ENCODE measurements at regions of chr1 and their contacts with region 1.

Region 1: DNA sequence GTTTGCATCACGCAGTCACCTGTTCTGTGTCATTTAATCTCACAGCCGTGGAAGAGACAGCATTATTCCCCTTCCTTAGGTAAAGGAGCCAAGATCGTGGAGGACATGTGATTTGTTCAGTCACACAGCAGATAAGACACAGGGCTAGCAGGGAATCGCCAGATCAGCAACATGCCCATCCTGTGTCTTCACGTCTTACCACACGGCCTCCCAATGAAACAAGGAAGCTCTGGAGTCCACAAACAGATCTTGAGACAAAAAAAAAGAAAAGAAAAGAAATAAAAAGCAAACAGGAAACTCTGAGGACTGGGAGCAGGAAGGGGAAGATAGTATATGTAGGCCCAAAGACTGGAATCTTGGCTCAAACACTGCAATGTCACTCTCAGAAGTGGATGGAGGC is 155.3 kb downstream of the ADSS2 start:
- DNase-seq: no peak
- H3K4me3 ChIP-seq: no peak overlapping the region
- H3K27ac ChIP-seq: no peak overlapping the region
- H3K4me1 ChIP-seq: peaks cover 0 to 4% (median 2%) of the 10 kb centered on the region in 4 experiments; a peak in 3 of 7 replicates
- H3K27me3 ChIP-seq: no peaks in the 10 kb centered on the region
- CTCF ChIP-seq: no peak
- EP300 ChIP-seq: no peak
- POLR2A ChIP-seq: no peak
- RAD21 ChIP-seq: no peak

Region 2: DNA sequence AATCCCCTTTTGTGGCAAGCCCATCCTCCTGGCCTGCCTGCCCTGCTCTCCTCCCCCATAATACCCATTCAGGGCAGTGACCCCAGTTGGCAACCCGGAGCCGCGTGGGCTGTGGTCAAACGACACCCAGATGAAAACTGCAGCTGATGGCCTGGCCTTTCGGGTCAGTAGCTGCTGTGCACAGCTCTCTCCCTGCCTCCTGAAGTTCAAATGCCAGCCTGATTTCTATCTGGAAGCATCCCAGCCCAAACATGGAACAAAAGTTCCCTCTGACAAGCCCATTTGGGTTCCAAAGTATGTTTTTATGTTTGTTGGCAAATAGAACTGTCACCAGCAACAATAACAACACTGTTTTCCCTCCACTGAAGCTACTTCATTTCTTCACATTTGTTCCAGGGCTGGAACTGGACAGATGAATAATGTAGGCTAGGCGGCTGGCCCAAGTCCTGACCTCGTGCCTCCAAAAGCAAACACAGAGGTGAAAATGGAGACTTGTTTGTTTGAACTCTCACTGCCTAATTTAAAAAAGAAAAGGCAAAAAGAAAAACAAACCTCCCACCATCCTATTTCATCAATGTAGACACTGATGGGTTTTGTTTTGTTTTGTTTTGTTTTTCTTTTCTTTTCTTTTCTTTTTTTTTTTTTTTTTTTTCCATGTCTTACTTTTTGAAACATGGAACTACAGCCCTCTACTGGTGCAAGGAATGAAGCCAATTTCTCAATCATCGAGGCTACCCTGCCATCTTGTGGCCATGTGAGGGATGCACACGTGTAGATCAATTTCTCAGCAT is 23.8 kb before region 1 on chr1:
- CTCF ChIA-PET with region 1: interaction called, 24 read pairs
- POLR2A ChIA-PET with region 1: no interaction called
- DNase-seq: peak; percentile 59 to 83
- H3K4me3 ChIP-seq: no peak overlapping the region
- H3K27ac ChIP-seq: no peak overlapping the region
- H3K4me1 ChIP-seq: no peaks in the 10 kb centered on the region
- H3K27me3 ChIP-seq: no peaks in the 10 kb centered on the region
- CTCF ChIP-seq: peak; percentile 72 to 99 (median 98)
- EP300 ChIP-seq: no peak
- POLR2A ChIP-seq: no peak
- RAD21 ChIP-seq: peak; percentile 97 to 100

Region 3: DNA sequence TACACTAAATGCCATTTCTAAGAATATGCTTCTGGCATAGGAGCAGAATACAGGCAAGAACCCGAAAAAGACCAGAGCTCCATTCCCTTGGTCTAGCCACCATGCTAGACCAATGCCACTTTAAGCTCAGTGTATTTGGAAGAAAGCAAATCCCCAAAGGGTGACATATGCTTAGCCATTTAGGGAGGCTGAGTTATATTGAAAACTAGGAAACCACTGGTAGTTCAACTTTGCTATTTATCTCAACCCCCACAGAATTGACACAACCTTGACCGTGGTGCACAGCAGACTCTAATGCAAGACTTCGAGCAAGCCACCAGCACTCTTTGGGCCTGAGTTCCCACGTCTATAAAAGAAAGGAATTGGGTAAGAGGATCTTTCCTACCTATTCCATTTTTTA is 12.7 kb before region 1 on chr1:
- CTCF ChIA-PET with region 1: interaction called, 21 read pairs
- POLR2A ChIA-PET with region 1: interaction called, 3 read pairs
- DNase-seq: no peak
- H3K4me3 ChIP-seq: no peak overlapping the region
- H3K27ac ChIP-seq: no peak overlapping the region
- H3K4me1 ChIP-seq: no peaks in the 10 kb centered on the region
- H3K27me3 ChIP-seq: peaks cover 0 to 2% (median 0%) of the 10 kb centered on the region in 4 experiments; a peak in 1 of 7 replicates
- CTCF ChIP-seq: no peak
- EP300 ChIP-seq: no peak
- POLR2A ChIP-seq: no peak
- RAD21 ChIP-seq: no peak

Region 4: GRCh38 chr1:244414543-244414942 is 118.1 kb after region 1 on chr1:
- CTCF ChIA-PET with region 1: interaction called, 13 read pairs
- POLR2A ChIA-PET with region 1: no interaction called
- DNase-seq: no peak
- H3K4me3 ChIP-seq: no peak overlapping the region
- H3K27ac ChIP-seq: no peak overlapping the region
- H3K4me1 ChIP-seq: peaks cover 0 to 3% (median 0%) of the 10 kb centered on the region in 4 experiments; a peak in 2 of 7 replicates
- H3K27me3 ChIP-seq: peaks cover 0 to 1% (median 0%) of the 10 kb centered on the region in 4 experiments; a peak in 1 of 7 replicates
- CTCF ChIP-seq: peak in 1 of 3 experiments; percentile 28; a peak in 1 of 4 replicates
- EP300 ChIP-seq: no peak
- POLR2A ChIP-seq: no peak
- RAD21 ChIP-seq: peak; percentile 41 to 60